ENCODE measurements at regions of chr6 and their contacts with region 1.

Region 1: GRCh38 chr6:121780325-121781313 is 345.2 kb downstream of the GJA1 start:
- DNase-seq: peak; percentile 83
- H3K4me3 ChIP-seq: no peak overlapping the region
- H3K27ac ChIP-seq: peak overlapping the region; percentile 54 to 55
- H3K4me1 ChIP-seq: no peaks in the 10 kb centered on the region
- H3K27me3 ChIP-seq: no peaks in the 10 kb centered on the region
- CTCF ChIP-seq: no peak
- POLR2A ChIP-seq: no peak

Region 2: GRCh38 chr6:121008553-121008952 is 772.1 kb before region 1 on chr6:
- intact Hi-C with region 1: no loop called
- DNase-seq: no peak
- H3K4me3 ChIP-seq: no peak overlapping the region
- H3K27ac ChIP-seq: no peak overlapping the region
- H3K4me1 ChIP-seq: no peaks in the 10 kb centered on the region
- H3K27me3 ChIP-seq: no peaks in the 10 kb centered on the region
- CTCF ChIP-seq: no peak
- POLR2A ChIP-seq: no peak

Region 3: GRCh38 chr6:121436960-121437850 is 343.4 kb before region 1 on chr6:
- intact Hi-C with region 1: loop called (anchors 5 kb)
- DNase-seq: peak; percentile 40
- H3K4me3 ChIP-seq: peak overlapping the region; percentile 42 to 47
- H3K27ac ChIP-seq: peak overlapping the region; percentile 79 to 80
- H3K4me1 ChIP-seq: no peaks in the 10 kb centered on the region
- H3K27me3 ChIP-seq: no peaks in the 10 kb centered on the region
- CTCF ChIP-seq: no peak
- POLR2A ChIP-seq: peak; percentile 4

Region 4: GRCh38 chr6:121498481-121499276 is 281.9 kb before region 1 on chr6:
- intact Hi-C with region 1: loop called (anchors 5 kb)
- DNase-seq: no peak
- H3K4me3 ChIP-seq: no peak overlapping the region
- H3K27ac ChIP-seq: peak overlapping the region; percentile 47 to 72
- H3K4me1 ChIP-seq: no peaks in the 10 kb centered on the region
- H3K27me3 ChIP-seq: no peaks in the 10 kb centered on the region
- CTCF ChIP-seq: no peak
- POLR2A ChIP-seq: no peak

Region 5: DNA sequence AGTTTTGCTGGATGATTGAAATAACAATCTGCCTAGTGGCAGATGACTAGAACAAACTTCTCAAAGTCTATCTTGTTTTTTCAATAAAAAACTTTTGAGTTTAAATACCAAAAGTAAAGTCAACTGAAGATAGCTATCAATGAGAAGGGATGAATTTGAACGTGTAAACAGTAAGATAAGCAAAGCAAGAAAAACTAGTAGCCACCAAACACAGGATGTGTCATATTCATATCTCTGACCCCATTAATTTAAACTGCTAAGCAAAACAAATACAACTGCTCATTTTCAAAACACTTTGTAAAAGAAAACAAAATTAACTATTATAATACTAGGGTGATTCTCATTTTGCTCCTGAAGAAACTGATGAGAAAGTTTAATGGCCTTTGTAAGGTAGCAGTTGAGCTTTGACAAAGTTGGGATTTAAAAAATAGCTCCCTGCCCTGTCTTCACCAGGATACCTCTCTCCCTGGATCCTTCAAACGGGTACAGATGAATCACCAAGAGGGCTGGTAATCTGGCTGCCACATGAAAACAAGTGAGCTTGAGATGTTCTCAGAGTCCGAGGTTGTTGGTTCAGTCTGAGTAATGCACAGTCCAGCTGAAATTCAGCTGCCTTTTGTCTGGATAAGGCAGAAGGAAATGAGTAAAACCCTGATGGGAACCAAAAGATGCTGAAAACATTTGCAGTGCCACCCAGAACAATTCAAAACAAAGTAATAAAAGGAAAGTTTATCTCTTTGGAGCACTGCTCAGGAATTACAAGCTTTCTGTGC is 258.5 kb before region 1 on chr6:
- intact Hi-C with region 1: loop called (anchors 10 kb)
- DNase-seq: peak; percentile 28
- H3K4me3 ChIP-seq: peak overlapping the region in 1 of 2 donors; percentile 5
- H3K27ac ChIP-seq: peak overlapping the region; percentile 26 to 49
- H3K4me1 ChIP-seq: no peaks in the 10 kb centered on the region
- H3K27me3 ChIP-seq: no peaks in the 10 kb centered on the region
- CTCF ChIP-seq: no peak
- POLR2A ChIP-seq: no peak

Region 6: GRCh38 chr6:121847806-121848522 is 67.3 kb after region 1 on chr6:
- intact Hi-C with region 1: no loop called
- DNase-seq: no peak
- H3K4me3 ChIP-seq: no peak overlapping the region
- H3K27ac ChIP-seq: no peak overlapping the region
- H3K4me1 ChIP-seq: no peaks in the 10 kb centered on the region
- H3K27me3 ChIP-seq: no peaks in the 10 kb centered on the region
- CTCF ChIP-seq: no peak
- POLR2A ChIP-seq: no peak

Region 7: GRCh38 chr6:121867095-121867494 is 86.5 kb after region 1 on chr6:
- intact Hi-C with region 1: no loop called
- DNase-seq: peak; percentile 19
- H3K4me3 ChIP-seq: no peak overlapping the region
- H3K27ac ChIP-seq: no peak overlapping the region
- H3K4me1 ChIP-seq: no peaks in the 10 kb centered on the region
- H3K27me3 ChIP-seq: no peaks in the 10 kb centered on the region
- CTCF ChIP-seq: no peak
- POLR2A ChIP-seq: no peak

Region 8: DNA sequence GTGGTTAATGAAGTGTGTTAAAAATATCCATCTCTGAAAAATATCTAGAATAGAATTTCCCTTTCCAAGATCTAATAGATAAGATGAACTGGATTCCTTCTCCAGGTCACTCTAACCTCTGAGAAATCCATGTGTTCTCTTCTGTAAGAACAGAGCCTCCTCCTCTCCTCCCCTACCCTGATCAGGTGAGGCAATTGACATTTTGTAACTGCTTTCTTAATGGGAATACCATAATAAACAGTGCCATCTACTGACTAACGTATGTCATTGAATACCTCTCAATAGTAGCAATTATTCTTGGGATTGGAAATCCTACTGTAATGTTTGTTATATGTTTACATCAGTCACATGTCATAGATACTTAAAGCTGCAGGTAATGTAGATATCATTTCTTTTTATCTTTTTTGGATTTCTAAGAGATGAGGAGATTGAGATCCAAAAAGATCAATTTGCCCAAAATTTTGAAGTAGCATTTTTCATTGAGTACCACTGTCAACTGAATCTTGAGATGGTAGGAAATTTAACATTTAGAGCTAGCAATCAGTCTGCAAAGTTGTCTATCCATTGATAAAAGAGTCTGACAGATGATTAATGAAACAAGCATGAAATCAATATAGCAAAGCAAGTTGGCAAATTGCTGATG is 253.0 kb after region 1 on chr6:
- intact Hi-C with region 1: loop called (anchors 10 kb)
- DNase-seq: peak; percentile 14
- H3K4me3 ChIP-seq: no peak overlapping the region
- H3K27ac ChIP-seq: no peak overlapping the region
- H3K4me1 ChIP-seq: no peaks in the 10 kb centered on the region
- H3K27me3 ChIP-seq: no peaks in the 10 kb centered on the region
- CTCF ChIP-seq: peak in 3 of 4 experiments; percentile 70 to 77 (median 76)
- POLR2A ChIP-seq: no peak

Measured in prostate gland (tissue), 2 donors.